Heart left ventricle (tissue), 16 donors: ENCODE measurements at regions of chr12 and their contacts with region 1.

Region 1: DNA sequence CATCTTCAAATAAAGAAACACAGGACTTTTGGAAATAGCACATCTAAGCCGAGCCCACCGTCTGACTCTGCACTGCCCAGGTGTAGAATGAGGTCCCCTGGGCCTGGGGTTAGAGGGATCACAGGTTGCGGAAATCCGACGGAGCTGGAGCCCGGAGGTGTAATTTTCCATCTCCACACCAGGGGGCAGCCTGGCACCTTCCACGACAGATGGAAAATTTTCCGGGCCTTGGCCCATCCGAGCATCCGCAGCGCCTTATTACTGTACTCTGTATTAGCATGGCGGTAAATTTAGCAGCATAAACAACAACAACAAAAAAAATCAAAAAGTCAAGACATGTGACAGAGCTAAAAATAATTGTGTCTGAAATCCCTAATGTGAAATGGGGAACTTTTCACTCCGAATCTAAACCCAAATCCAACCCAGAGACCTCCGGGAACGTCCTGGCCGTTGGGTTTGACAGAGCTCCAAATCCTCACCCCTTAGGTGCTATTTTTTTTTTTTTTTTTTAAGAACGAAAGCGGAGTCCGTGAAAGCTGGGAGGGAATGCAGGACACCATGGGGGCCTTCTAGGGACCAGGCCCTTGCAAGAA is 93.9 kb downstream of the KSR2 start:
- DNase-seq: peak; percentile 58 to 76 (median 61)
- ATAC-seq: peak; percentile 61 to 93 (median 78)
- H3K4me3 ChIP-seq: no peak overlapping the region
- H3K27ac ChIP-seq: no peak overlapping the region
- H3K4me1 ChIP-seq: peaks cover 0 to 5% (median 0%) of the 10 kb centered on the region in 12 donors
- H3K27me3 ChIP-seq: peaks cover 0 to 40% (median 17%) of the 10 kb centered on the region in 9 donors
- CTCF ChIP-seq: peak; percentile 75 to 92 (median 84)
- POLR2A ChIP-seq: no peak

Region 2: GRCh38 chr12:117926391-117926899 is 51.5 kb after region 1 on chr12:
- intact Hi-C with region 1: no loop called
- DNase-seq: no peak
- ATAC-seq: peak in 1 of 4 donors; percentile 50
- H3K4me3 ChIP-seq: no peak overlapping the region
- H3K27ac ChIP-seq: no peak overlapping the region
- H3K4me1 ChIP-seq: peaks cover 0 to 5% (median 0%) of the 10 kb centered on the region in 12 donors
- H3K27me3 ChIP-seq: no peaks in the 10 kb centered on the region
- CTCF ChIP-seq: no peak
- POLR2A ChIP-seq: no peak

Region 3: DNA sequence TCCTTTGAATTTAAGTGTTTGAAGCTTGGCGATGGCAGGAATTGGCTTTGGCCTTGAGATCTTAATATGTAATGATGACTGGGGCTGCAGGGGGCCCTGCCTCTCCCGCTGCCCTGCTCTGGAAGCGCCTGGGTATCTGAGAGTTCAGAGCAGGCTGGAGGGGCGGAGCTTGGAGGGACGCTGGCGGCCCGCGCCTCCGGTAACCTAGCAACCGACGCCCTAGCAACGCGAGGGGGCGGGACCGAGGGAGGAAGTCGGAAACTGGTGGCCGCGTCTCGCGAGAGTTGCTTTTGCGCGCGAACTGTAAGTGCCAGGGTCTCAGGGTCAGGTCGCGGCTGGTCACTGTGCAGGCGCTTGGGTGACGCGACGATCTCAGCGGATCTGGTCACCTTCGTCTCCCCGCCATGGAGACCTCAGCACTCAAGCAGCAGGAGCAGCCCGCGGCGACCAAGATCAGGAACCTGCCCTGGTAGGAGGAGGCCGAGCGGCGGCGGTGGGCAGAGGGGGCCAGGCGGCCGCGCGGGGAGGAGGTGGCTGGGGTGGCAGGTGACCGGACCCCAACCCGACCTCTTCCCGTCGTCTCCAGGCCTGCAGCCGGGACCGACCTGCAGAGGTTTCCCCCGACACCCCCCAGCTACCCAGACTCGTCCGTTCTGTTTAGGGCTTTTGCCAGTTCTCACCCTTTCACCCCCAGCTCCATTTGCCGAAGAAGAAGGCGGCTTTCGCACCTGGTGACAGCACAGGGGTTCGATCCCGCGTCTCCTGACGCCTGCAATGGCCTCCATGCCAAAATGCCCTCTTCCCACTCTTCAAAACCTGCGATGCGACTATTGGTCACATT is 141.7 kb after region 1 on chr12 and contains the start of gene RFC5:
- intact Hi-C with region 1: loop called in 2 of 10 experiments (anchors 1 to 10 kb)
- DNase-seq: peak; percentile 98 to 99 (median 99)
- ATAC-seq: peak; percentile 99 to 100 (median 100)
- H3K4me3 ChIP-seq: peak within 1 kb of the TSS; percentile 73 to 99 (median 88)
- H3K27ac ChIP-seq: peak within 1 kb of the TSS in 7 of 12 donors; percentile 5 to 73 (median 55)
- H3K4me1 ChIP-seq: peaks cover 0 to 19% (median 10%) of the 10 kb centered on the region in 12 donors
- H3K27me3 ChIP-seq: no peaks in the 10 kb centered on the region
- CTCF ChIP-seq: peak in 1 of 12 donors; percentile 4
- POLR2A ChIP-seq: peak in 1 of 2 donors; percentile 20
- total RNA-seq, gene RFC5: 3.5 to 6.9 (median 4.7) TPM

Region 4: DNA sequence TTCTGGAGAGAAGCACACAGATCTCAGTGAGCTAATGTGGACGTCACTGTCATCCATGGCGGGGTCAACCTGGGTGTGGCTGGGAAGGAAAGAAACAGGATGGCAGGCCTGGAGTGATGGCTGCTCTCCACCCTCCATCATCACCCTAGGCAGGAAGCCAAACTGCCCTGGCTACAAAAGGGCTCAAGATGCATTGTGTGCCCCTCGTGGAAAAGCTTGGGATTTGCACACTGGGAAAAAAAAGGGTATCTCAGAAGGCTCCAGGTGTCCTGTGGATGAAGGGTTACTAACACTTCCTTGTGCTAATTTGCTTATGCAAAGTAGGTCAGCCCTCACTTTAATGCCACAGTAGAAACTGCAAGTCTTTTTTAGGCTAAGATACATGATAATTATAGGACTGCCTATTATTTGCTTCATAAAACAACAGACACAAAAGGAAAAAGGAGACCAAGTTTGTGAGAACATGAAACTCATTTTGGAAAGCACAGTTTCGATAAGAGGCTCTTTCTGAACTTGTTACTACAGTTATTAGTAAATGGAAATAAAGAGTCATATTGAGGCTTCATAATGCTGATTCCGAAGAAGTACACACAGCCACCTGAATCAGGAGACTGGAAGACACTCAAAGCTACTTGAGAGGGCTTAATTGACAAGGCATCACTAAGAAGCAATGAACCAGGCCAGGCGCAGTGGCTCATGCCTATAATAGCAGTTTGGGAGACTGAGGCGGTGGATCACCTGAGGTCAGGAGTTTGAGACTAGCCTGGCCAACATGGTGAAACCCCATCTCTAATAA is 160.5 kb after region 1 on chr12:
- intact Hi-C with region 1: loop called in 8 of 10 experiments (anchors 5 to 10 kb)
- DNase-seq: no peak
- ATAC-seq: peak in 3 of 4 donors; percentile 29 to 44 (median 35)
- H3K4me3 ChIP-seq: no peak overlapping the region
- H3K27ac ChIP-seq: no peak overlapping the region
- H3K4me1 ChIP-seq: peaks cover 0 to 6% (median 0%) of the 10 kb centered on the region in 12 donors
- H3K27me3 ChIP-seq: no peaks in the 10 kb centered on the region
- CTCF ChIP-seq: peak in 1 of 12 donors; percentile 6
- POLR2A ChIP-seq: no peak

Region 5: DNA sequence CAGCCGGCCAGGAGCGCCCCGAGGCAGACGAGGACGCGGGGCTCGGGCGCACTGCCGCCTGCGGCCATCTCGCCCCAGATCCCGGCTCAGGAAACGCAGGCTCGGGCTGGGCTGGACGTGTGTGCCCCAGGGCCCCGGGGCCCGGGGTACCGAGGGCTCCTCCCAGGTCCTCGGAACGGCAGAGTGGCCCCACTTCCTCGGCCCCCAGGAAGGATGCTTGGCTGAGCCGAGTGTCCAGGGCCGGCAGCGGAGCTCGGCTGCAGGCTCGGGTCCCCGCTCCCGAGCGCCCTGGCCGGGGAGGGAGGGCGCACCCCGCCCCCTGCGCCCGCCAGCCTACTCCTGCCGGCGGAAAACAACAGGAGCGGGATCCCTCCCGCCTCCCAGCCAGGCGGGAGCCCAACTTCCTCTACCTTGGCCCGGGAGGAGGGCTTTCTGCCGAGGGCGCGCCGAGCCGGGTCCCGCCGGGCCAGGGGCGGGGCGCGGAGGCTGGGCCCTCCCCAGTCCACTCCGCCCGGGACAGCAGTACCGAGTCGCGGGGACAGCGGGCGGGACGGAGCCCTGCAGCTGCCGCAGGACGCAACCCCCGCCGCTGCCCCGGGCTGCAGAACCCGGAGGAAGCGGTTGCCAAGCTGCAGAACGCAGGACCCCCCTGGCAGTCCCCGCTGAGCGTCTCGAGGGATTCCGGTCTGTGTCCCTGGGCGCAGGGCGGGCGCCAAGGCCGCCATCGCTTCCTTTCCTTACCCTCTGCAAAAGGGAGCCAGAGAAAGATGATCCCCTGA is 228.9 kb after region 1 on chr12 and contains the start of gene VSIG10:
- intact Hi-C with region 1: loop called in 1 of 10 experiments (anchors 10 kb)
- DNase-seq: peak; percentile 75 to 89 (median 76)
- ATAC-seq: peak; percentile 75 to 97 (median 94)
- H3K4me3 ChIP-seq: peak within 1 kb of the TSS; percentile 60 to 99 (median 86)
- H3K27ac ChIP-seq: peak within 1 kb of the TSS; percentile 25 to 88 (median 78)
- H3K4me1 ChIP-seq: peaks cover 0 to 19% (median 9%) of the 10 kb centered on the region in 12 donors
- H3K27me3 ChIP-seq: no peaks in the 10 kb centered on the region
- CTCF ChIP-seq: peak in 1 of 12 donors; percentile 6
- POLR2A ChIP-seq: peak in 1 of 2 donors; percentile 84
- total RNA-seq, gene VSIG10: 6.9 to 17.7 (median 10.7) TPM

Region 6: DNA sequence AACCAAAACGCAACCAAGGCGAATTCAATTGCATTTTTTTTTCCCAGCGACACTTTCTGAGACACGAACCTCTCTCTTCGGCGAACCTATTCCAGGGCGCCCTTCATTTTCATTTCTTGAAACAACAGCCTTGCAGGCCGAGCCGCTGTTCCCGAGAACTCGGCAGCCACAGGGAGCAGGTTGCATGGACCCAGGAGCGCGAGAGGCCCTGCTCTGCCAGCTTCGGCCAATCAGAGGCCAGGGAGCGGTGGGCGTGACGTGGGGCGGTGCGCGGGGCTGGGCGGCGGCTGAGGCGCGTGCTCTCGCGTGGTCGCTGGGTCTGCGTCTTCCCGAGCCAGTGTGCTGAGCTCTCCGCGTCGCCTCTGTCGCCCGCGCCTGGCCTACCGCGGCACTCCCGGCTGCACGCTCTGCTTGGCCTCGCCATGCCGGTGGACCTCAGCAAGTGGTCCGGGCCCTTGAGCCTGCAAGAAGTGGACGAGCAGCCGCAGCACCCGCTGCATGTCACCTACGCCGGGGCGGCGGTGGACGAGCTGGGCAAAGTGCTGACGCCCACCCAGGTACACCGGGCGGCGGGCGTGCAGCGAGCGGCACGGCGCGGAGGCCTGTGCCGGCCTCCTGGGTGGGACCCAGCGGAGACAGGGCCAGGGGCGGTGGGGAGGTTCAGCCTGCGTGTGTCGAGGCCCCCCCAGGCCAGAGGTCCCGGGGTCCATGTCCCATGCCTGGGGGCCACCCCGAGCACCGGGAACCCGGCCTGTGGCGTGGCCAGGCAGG is 261.0 kb after region 1 on chr12 and contains the start of gene PEBP1:
- intact Hi-C with region 1: loop called in 1 of 10 experiments (anchors 10 kb)
- DNase-seq: peak; percentile 94 to 98 (median 96)
- ATAC-seq: peak; percentile 95 to 99 (median 99)
- H3K4me3 ChIP-seq: peak within 1 kb of the TSS; percentile 69 to 98 (median 87)
- H3K27ac ChIP-seq: peak within 1 kb of the TSS; percentile 63 to 92 (median 86)
- H3K4me1 ChIP-seq: peaks cover 0 to 36% (median 16%) of the 10 kb centered on the region in 12 donors
- H3K27me3 ChIP-seq: no peaks in the 10 kb centered on the region
- CTCF ChIP-seq: peak in 1 of 12 donors; percentile 25
- POLR2A ChIP-seq: peak in 1 of 2 donors; percentile 87
- total RNA-seq, gene PEBP1: 301 to 751 (median 420) TPM